Prostate gland (tissue), 2 donors: ENCODE measurements at regions of chr15 and their contacts with region 1.

Region 1: DNA sequence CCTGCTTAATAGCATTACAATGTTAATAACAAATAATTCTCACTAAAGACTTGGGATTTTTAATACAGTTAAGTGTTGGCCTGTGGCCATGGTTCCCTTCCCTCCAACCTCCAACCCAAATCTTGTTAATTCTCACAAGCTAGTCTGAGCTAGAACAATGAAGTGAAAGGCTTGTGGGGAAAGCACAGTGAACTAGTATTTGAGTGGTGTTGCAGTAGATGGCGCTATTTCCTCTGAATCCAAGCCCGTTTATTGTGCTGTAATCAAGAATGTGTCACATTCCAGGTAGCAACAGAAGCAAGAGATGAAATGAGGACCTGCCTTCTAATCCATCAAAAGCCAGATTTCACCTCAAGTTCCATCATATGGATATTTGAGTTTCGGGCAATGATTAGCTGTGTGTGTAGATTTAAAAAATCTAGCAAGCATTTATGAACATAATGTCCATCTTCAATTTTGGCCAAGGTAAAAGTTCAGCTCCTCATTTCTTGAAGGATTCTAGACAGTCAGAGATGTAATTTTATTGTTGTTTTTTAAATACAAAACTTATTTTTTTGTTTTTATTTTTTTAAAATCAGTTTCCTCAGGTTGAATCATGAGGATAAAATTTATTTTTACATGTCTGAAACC is 160.7 kb downstream of the SQOR start:
- DNase-seq: peak; percentile 61
- H3K4me3 ChIP-seq: no peak overlapping the region
- H3K27ac ChIP-seq: no peak overlapping the region
- H3K4me1 ChIP-seq: no peaks in the 10 kb centered on the region
- H3K27me3 ChIP-seq: no peaks in the 10 kb centered on the region
- CTCF ChIP-seq: peak; percentile 28 to 81 (median 72)
- POLR2A ChIP-seq: no peak

Region 2: GRCh38 chr15:45884755-45885445 is 89.3 kb after region 1 on chr15:
- intact Hi-C with region 1: loop called (anchors 10 kb)
- DNase-seq: no peak
- H3K4me3 ChIP-seq: no peak overlapping the region
- H3K27ac ChIP-seq: no peak overlapping the region
- H3K4me1 ChIP-seq: no peaks in the 10 kb centered on the region
- H3K27me3 ChIP-seq: no peaks in the 10 kb centered on the region
- CTCF ChIP-seq: no peak
- POLR2A ChIP-seq: no peak